Heart right ventricle (tissue), 16 donors: ENCODE measurements at regions of chr22 and their contacts with region 1.

Region 1: GRCh38 chr22:23069502-23070357 is 589 bp upstream of the GNAZ start:
- DNase-seq: peak; percentile 91 to 95
- ATAC-seq: peak; percentile 94 to 98 (median 96)
- H3K4me3 ChIP-seq: peak overlapping the region in 9 of 10 donors; percentile 37 to 85 (median 63)
- H3K27ac ChIP-seq: peak overlapping the region in 4 of 10 donors; percentile 15 to 59 (median 53)
- H3K4me1 ChIP-seq: peaks cover 0 to 42% (median 20%) of the 10 kb centered on the region in 9 donors
- H3K27me3 ChIP-seq: peaks cover 0 to 36% (median 0%) of the 10 kb centered on the region in 7 donors
- CTCF ChIP-seq: no peak

Region 2: DNA sequence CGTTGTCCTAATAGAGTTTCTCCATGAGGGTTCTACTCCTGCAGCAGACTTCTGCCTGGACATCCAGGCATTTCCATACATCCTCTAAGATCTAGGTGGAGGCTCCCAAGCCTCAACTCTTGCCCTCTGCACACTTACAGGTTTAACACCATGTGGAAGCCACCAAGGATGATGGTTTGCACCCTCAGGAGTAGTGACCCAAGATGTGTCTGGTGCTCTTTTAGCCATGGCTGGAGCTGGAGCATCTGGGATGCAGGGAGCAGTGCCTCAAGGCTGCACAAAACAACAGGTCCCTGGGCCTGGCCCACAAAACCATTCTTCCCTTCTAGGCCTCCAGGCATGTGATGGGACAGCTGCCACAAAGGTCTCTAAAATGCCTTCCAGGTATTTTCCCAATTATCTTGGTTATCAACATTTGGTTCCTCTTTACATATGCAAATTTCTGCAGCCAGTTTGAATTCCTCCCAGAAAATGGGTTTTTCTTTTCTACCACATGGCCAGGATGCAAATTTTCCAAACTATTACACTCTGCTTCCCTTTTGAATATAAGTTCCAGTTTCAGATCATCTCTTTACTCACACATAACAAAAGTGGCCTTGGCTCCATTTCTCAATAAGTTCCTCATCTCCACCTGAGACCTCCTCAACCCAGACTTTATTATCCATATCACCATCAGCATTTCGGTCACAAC is 68.9 kb before region 1 on chr22:
- intact Hi-C with region 1: loop called in 1 of 10 experiments (anchors 10 kb)
- DNase-seq: no peak
- ATAC-seq: no peak
- H3K4me3 ChIP-seq: no peak overlapping the region
- H3K27ac ChIP-seq: no peak overlapping the region
- H3K4me1 ChIP-seq: no peaks in the 10 kb centered on the region
- H3K27me3 ChIP-seq: peaks cover 0 to 11% (median 0%) of the 10 kb centered on the region in 7 donors
- CTCF ChIP-seq: no peak

Region 3: DNA sequence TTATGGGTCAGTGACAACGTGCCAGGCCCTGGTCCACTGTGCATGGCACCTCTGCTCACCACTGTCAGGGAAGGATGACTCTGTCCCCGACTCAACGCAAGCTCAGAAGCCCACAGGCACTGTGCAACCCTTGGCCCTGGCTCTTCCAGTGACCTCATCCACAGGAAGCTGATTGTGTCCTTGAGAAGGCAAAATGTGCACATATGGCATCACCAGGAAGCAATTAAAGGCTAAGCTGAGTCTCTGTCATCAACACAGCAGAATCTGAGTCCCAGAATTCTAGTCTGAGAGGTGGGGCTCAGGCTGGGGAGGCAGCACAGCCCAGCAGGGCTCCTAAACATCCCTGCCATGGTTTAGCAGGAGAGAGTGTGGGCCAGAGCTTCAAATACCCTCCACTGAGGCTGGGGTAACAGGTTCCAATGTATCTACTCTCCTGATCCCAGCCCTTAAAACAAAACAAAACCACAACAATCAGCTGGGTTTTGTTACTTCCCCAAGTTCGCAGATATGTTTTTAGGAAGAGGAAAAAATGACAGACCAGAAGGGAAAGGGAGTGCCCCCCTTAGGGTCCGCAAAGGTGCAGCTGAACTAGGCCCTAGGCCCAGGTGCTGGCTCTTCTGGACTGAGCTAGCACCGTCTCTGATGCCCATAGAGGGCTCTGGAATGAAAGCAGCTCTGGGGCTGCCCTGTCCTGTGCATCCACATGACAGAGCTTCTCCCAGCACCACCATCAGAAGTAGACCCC is 32.9 kb before region 1 on chr22:
- intact Hi-C with region 1: no loop called
- DNase-seq: no peak
- ATAC-seq: peak; percentile 28 to 73 (median 56)
- H3K4me3 ChIP-seq: no peak overlapping the region
- H3K27ac ChIP-seq: no peak overlapping the region
- H3K4me1 ChIP-seq: peaks cover 0 to 8% (median 5%) of the 10 kb centered on the region in 9 donors
- H3K27me3 ChIP-seq: peaks cover 0 to 22% (median 10%) of the 10 kb centered on the region in 7 donors
- CTCF ChIP-seq: no peak

Region 4: DNA sequence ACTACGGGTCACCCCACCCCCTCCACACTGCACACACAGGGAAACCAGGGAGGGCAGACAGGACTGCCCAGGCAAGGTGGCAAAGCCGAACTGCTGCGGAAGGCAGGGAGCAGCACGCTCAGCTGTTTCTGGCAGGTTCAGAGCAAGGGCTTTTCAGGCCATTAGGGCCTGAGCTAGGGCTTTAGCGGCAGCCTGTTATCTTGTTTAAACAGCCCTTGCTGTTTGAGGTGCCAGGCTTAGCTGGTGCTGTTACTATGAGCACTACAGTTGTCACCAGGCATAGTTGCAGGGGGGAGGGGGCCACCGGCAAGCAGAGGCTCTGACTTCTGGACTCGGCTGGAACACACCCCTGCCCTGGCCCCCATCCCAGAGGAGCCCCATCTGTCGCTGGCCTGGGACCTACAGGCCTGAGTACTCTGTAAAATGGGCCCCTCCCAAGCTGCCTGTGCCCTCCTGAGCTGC is 37.2 kb after region 1 on chr22:
- intact Hi-C with region 1: loop called in 1 of 10 experiments (anchors 5 kb)
- DNase-seq: peak; percentile 45 to 65
- ATAC-seq: peak; percentile 62 to 89 (median 70)
- H3K4me3 ChIP-seq: no peak overlapping the region
- H3K27ac ChIP-seq: peak overlapping the region in 1 of 10 donors; percentile 42
- H3K4me1 ChIP-seq: peaks cover 0 to 30% (median 9%) of the 10 kb centered on the region in 9 donors
- H3K27me3 ChIP-seq: no peaks in the 10 kb centered on the region
- CTCF ChIP-seq: no peak